ENCODE measurements at regions of chr20 and their contacts with region 1.

Region 1: GRCh38 chr20:38875175-38875993 is 50.8 kb upstream of the FAM83D start:
- DNase-seq: peak; percentile 97
- ATAC-seq: peak; percentile 68
- H3K4me3 ChIP-seq: peak overlapping the region; percentile 44
- H3K27ac ChIP-seq: peak overlapping the region; percentile 96
- H3K4me1 ChIP-seq: peaks cover 80% of the 10 kb centered on the region
- H3K27me3 ChIP-seq: no peaks in the 10 kb centered on the region
- CTCF ChIP-seq: no peak
- EP300 ChIP-seq: peak; percentile 96 to 99
- POLR2A ChIP-seq: peak; percentile 76
- RAD21 ChIP-seq: peak; percentile 14; the same call in 1 of the 2 replicates

Region 2: GRCh38 chr20:38805502-38805957 is 69.9 kb before region 1 on chr20 and contains the start of gene PPP1R16B:
- CTCF ChIA-PET with region 1: interaction called, 81 read pairs
- POLR2A ChIA-PET with region 1: interaction called, 76 read pairs
- RAD21 ChIA-PET with region 1: interaction called, 98 read pairs
- SMC1A ChIA-PET with region 1: interaction called, 90 read pairs
- in situ Hi-C with region 1: loop called (anchors 5 kb)
- intact Hi-C with region 1: loop called (anchors 1 kb)
- DNase-seq: no peak
- ATAC-seq: peak; percentile 78
- H3K4me3 ChIP-seq: peak within 1 kb of the TSS; percentile 87
- H3K27ac ChIP-seq: peak within 1 kb of the TSS; percentile 84
- H3K4me1 ChIP-seq: peaks cover 31% of the 10 kb centered on the region
- H3K27me3 ChIP-seq: no peaks in the 10 kb centered on the region
- CTCF ChIP-seq: no peak
- EP300 ChIP-seq: no peak
- POLR2A ChIP-seq: peak; percentile 96
- RAD21 ChIP-seq: no peak
- polyA plus RNA-seq, gene PPP1R16B: 13.4 to 14.2 TPM

Region 3: DNA sequence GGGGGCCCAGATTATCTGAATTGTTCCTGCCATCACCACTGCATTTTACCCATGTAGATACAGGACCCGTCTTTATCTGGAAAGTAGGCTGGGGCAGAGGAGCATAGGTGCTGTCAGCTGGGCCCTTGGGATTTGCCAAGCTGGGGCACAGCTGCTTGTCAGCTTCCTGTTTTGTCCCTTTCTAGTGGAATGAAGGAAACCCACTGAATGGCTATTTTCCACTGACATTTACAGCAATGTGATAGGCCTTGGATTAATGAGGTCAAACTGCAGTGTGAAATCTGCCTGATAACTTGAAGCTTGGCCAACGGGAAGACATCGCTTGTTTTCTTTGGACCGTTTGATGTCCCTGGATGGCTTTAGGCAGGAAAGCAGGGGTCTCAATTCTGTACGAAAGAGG is 63.2 kb before region 1 on chr20:
- CTCF ChIA-PET with region 1: interaction called, 81 read pairs
- POLR2A ChIA-PET with region 1: interaction called, 76 read pairs
- RAD21 ChIA-PET with region 1: interaction called, 98 read pairs
- SMC1A ChIA-PET with region 1: interaction called, 90 read pairs
- in situ Hi-C with region 1: loop called (anchors 5 kb)
- intact Hi-C with region 1: loop called (anchors 1 kb)
- DNase-seq: no peak
- ATAC-seq: no peak
- H3K4me3 ChIP-seq: peak overlapping the region; percentile 60; the same call in 1 of the 2 replicates
- H3K27ac ChIP-seq: peak overlapping the region; percentile 84; the same call in 1 of the 2 replicates
- H3K4me1 ChIP-seq: peaks cover 61% of the 10 kb centered on the region
- H3K27me3 ChIP-seq: no peaks in the 10 kb centered on the region
- CTCF ChIP-seq: no peak
- EP300 ChIP-seq: no peak
- POLR2A ChIP-seq: 0 out of 2 replicates have a peak, but pooled peaks have one; percentile 2
- RAD21 ChIP-seq: no peak

Region 4: DNA sequence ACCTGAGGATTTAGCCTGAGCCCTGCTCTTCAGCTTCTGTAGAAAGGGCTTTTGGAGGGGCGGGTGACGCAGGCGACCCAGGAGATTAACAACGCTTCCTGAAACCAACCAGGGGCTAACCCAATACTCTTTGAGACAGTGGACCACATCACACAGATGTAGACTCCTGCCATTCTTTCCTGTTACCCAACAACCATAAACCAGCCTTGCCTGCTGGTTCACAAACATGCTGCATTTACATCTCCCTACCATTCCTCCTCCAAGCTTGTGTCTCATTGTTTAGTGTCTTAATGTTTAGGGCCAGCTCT is 41.6 kb before region 1 on chr20:
- CTCF ChIA-PET with region 1: interaction called, 32 read pairs
- POLR2A ChIA-PET with region 1: interaction called, 7 read pairs
- RAD21 ChIA-PET with region 1: interaction called, 5 read pairs
- SMC1A ChIA-PET with region 1: interaction called, 124 read pairs
- in situ Hi-C with region 1: no loop called
- intact Hi-C with region 1: loop called (anchors 1 kb)
- DNase-seq: no peak
- ATAC-seq: peak; percentile 51
- H3K4me3 ChIP-seq: no peak overlapping the region
- H3K27ac ChIP-seq: peak overlapping the region; percentile 77
- H3K4me1 ChIP-seq: peaks cover 54% of the 10 kb centered on the region
- H3K27me3 ChIP-seq: no peaks in the 10 kb centered on the region
- CTCF ChIP-seq: no peak
- EP300 ChIP-seq: no peak
- POLR2A ChIP-seq: no peak
- RAD21 ChIP-seq: no peak

Region 5: GRCh38 chr20:38842558-38842981 is 32.8 kb before region 1 on chr20:
- CTCF ChIA-PET with region 1: interaction called, 32 read pairs
- POLR2A ChIA-PET with region 1: interaction called, 58 read pairs
- RAD21 ChIA-PET with region 1: interaction called, 120 read pairs
- SMC1A ChIA-PET with region 1: interaction called, 124 read pairs
- in situ Hi-C with region 1: no loop called
- intact Hi-C with region 1: loop called (anchors 1 kb)
- DNase-seq: peak; percentile 91
- ATAC-seq: peak; percentile 99
- H3K4me3 ChIP-seq: peak overlapping the region; percentile 8; the same call in 1 of the 2 replicates
- H3K27ac ChIP-seq: peak overlapping the region; percentile 96
- H3K4me1 ChIP-seq: peaks cover 59% of the 10 kb centered on the region
- H3K27me3 ChIP-seq: no peaks in the 10 kb centered on the region
- CTCF ChIP-seq: no peak
- EP300 ChIP-seq: peak; percentile 67 to 95
- POLR2A ChIP-seq: no peak
- RAD21 ChIP-seq: peak; percentile 29; the same call in 1 of the 2 replicates

Region 6: GRCh38 chr20:38973645-38974044 is 98.3 kb after region 1 on chr20:
- CTCF ChIA-PET with region 1: no interaction called
- POLR2A ChIA-PET with region 1: no interaction called
- RAD21 ChIA-PET with region 1: no interaction called
- SMC1A ChIA-PET with region 1: no interaction called
- in situ Hi-C with region 1: no loop called
- intact Hi-C with region 1: no loop called
- DNase-seq: no peak
- ATAC-seq: no peak
- H3K4me3 ChIP-seq: no peak overlapping the region
- H3K27ac ChIP-seq: peak overlapping the region; percentile 26
- H3K4me1 ChIP-seq: no peaks in the 10 kb centered on the region
- H3K27me3 ChIP-seq: no peaks in the 10 kb centered on the region
- CTCF ChIP-seq: no peak
- EP300 ChIP-seq: no peak
- POLR2A ChIP-seq: no peak
- RAD21 ChIP-seq: no peak

Measured in GM12878 (cell line).